GM13977 (cell line): ENCODE measurements at regions of chr17 and their contacts with region 1.

Region 1: DNA sequence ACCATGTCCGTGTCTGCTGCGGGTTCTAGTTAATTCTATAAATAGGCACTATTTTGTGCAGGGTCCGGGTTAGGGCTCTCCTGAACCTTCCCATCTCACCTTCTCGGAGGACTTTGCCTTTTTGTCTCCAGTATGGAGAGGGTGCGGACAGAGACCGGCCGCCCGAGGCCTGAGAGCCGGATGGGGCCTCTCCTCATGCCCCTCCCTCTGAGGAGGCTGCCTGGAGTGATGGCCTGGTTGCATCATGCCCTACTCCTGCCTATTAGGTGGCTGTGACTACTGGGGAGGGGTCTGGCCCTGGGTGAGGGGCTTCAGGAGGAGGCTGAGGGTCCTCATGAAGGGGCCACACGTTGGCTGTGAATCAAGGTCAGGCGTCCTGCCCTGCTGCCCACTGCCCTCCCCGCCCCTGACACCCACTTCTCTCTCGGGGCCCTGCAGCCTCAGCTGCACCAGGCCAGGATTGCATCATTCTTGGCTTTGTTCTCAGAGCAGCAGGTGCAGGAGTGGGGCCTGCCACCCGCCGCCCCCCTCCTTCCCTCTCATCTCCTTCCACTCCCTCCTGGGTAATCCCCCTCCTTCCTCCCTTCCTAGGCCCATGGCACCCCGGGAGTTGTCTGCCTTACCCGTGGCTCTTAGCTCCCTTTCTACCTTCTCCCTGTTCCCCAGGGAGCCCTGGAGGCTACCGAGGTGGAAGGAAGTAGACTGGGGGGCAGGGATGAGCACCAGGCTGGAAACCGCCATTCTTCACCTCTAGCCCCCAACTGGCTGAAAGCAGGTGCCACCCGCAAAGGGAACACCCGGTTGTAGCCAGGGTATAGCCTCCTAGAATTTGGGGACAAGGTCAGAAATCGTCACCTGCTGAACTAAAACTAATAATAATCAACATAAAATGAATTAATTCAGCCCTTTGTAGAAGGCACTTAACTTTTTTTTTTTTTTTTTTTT is 12.7 kb upstream of the ARHGAP23 start:
- DNase-seq: no peak
- CTCF ChIP-seq: no peak

Region 2: DNA sequence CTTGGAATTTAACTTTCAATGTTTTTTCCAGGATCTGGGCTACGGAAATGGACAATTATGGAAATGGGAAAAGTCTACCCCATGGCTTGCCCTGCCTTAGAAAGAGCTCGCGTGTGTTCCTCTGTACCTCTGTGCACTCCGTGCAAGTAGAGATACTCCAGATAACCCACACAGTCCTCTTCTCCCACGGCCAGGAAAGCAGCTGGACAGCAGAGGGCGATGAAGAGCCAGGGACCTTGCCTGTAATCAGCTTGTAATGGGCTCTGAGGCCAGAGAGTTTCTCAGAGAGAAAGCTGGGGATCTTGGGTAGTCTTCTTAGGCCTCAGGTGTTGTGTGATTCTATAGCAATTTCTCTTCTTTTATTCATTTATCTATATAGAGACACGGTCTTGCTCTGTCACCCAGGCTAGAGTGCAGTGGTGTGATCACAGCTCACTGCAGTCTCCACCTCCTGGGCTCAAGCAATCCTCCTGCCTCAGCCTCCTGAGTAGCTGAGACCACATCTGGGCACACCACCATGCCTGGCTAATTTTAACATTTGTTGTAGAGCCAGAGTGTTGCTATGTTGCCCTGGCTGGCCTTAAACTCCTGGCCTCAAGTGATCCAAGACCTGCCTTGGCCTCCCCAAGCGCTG is 66.3 kb before region 1 on chr17:
- in situ Hi-C with region 1: loop called (anchors 5 kb)
- DNase-seq: peak; percentile 77
- CTCF ChIP-seq: peak; percentile 95